ENCODE measurements at regions of chr7 and their contacts with region 1.

Region 1: DNA sequence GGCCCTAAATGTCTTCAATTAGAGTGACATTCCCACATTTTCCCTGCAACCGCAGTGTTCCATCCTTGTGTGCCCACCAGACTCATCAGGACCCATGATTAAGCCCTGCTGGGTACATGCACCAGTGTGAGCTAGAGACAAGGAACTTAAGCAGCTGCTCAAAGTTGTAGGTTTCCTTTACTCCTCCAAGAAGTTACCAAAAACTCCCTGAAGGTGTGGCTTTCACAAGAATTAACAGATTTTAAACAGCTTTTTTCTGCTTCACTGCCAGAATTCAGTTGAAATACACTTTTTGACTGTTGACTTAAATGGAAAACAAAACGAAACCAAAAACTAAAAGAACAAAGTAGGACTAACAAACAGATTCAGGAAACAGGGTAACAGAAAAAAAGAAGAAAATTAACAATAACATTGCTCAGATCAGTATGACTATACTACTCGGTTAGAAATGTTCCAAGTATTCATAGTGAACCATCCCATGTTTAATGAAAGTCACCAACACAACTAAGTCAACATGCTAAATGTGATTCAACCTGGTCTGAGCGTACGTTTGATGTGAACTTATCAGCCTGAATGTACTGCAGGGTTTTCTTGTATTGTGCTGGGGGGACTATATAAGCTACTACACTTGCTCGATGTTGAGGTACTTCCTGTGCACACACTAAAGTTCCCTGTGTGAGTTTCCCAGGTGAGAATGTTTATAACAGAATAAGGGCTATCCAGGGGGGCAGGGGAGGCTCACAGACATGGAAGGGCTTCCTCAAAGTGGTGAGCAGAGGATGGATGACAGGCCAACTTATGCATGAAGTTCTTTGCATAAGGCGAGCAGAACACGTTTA is 22.2 kb downstream of the SLC37A3 start:
- DNase-seq: peak; percentile 84
- H3K4me3 Mint-ChIP-seq: peak overlapping the region; percentile 78
- H3K27ac Mint-ChIP-seq: peak overlapping the region; percentile 99
- H3K4me1 Mint-ChIP-seq: peaks cover 40% of the 10 kb centered on the region
- H3K27me3 Mint-ChIP-seq: no peaks in the 10 kb centered on the region

Region 2: GRCh38 chr7:140390466-140391190 is 14.5 kb after region 1 on chr7:
- intact Hi-C with region 1: loop called (anchors 1 kb)
- DNase-seq: peak; percentile 68
- H3K4me3 Mint-ChIP-seq: no peak overlapping the region
- H3K27ac Mint-ChIP-seq: no peak overlapping the region
- H3K4me1 Mint-ChIP-seq: peaks cover 7% of the 10 kb centered on the region
- H3K27me3 Mint-ChIP-seq: no peaks in the 10 kb centered on the region